A673 (cell line): ENCODE measurements at regions of chr5 and their contacts with region 1.

Region 1: GRCh38 chr5:168219515-168220410 is 71.7 kb upstream of the WWC1 start:
- DNase-seq: peak; percentile 83
- H3K4me3 ChIP-seq: no peak overlapping the region
- H3K27ac ChIP-seq: peak overlapping the region; percentile 44
- H3K4me1 ChIP-seq: peaks cover 47% of the 10 kb centered on the region
- H3K27me3 ChIP-seq: no peaks in the 10 kb centered on the region
- CTCF ChIP-seq: peak; percentile 78

Region 2: DNA sequence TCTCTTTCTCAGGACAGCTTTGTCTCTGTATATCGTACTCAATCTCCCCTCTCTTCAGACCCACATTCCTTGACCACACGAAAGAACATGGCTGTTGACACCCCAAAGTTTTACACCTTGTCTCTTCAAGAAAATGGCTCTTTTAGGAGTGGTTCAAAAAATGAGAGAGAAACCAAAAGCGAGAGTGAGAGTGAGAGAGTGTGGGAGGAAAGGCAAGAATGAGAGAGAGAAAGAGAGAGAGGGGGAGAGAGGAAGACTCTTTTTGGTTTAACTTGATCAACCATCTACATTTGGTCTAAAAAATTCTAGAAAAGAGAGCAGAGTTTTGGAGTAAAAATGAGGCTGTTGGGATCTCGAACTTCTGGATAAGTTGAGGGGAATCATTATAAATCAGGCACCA is 510.1 kb before region 1 on chr5:
- CTCF ChIA-PET with region 1: no interaction called
- POLR2A ChIA-PET with region 1: no interaction called
- intact Hi-C with region 1: loop called (anchors 10 kb)
- DNase-seq: no peak
- H3K4me3 ChIP-seq: no peak overlapping the region
- H3K27ac ChIP-seq: no peak overlapping the region
- H3K4me1 ChIP-seq: peaks cover 37% of the 10 kb centered on the region
- H3K27me3 ChIP-seq: no peaks in the 10 kb centered on the region
- CTCF ChIP-seq: no peak

Region 3: DNA sequence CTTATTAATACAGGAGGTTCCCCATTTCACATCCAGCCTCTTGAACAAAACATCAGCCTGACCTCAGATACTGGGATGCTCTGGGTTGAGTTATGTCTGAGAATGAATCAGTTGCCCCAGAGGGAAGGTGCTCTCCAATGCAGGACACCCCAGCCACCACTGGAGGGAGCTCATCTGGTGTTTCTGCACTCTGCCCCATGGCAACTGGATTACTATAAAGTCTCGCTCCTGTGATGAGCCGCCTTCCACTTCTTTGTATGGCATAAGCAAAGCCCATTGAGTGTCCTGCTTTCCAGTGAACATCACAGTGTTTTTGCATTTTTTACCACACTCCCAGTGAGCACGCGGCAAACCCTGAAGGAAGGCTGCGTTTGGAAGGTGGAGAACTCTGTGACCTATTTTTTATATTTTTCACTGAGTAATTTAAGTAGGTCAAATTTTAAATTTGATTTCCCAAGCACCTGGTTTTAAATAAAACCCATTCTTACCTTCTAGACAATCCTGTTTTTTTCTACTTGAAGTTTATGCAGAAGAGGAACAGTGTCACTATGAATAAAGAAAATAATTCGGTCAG is 105.2 kb before region 1 on chr5:
- CTCF ChIA-PET with region 1: no interaction called
- POLR2A ChIA-PET with region 1: no interaction called
- intact Hi-C with region 1: loop called (anchors 2 kb)
- DNase-seq: peak; percentile 73
- H3K4me3 ChIP-seq: no peak overlapping the region
- H3K27ac ChIP-seq: no peak overlapping the region
- H3K4me1 ChIP-seq: peaks cover 19% of the 10 kb centered on the region
- H3K27me3 ChIP-seq: no peaks in the 10 kb centered on the region
- CTCF ChIP-seq: peak; percentile 83

Region 4: GRCh38 chr5:168291464-168291961 is 71.8 kb after region 1 on chr5 and contains the start of gene WWC1:
- CTCF ChIA-PET with region 1: no interaction called
- POLR2A ChIA-PET with region 1: no interaction called
- intact Hi-C with region 1: no loop called
- DNase-seq: peak; percentile 52
- H3K4me3 ChIP-seq: peak within 1 kb of the TSS; percentile 60
- H3K27ac ChIP-seq: no peak within 1 kb of the TSS
- H3K4me1 ChIP-seq: no peaks in the 10 kb centered on the region
- H3K27me3 ChIP-seq: no peaks in the 10 kb centered on the region
- CTCF ChIP-seq: peak; percentile 39
- total RNA-seq, gene WWC1: 8.2 and 8.8 TPM in 2 replicates

Region 5: DNA sequence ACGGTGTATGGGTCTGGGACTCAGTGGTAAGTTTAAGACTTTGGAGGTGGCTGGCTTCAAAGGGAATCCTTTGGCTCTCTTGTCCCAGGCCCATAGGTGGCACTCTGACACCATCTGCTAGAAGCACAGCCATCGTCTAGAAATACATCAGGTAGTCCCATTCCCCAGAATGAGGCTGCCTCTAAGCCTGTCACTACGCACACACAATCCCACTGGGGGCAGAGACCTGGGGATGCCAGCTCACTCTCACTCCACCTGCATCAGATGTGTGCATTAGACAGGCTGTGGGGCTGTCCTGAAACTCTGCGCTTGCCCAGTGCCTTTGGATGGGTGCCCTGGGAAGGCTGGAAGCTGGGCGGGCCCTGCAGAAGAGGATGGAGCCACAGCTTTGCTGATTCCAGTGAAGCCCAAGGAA is 486.9 kb after region 1 on chr5:
- CTCF ChIA-PET with region 1: no interaction called
- POLR2A ChIA-PET with region 1: no interaction called
- intact Hi-C with region 1: no loop called
- DNase-seq: peak; percentile 51
- H3K4me3 ChIP-seq: no peak overlapping the region
- H3K27ac ChIP-seq: no peak overlapping the region
- H3K4me1 ChIP-seq: no peaks in the 10 kb centered on the region
- H3K27me3 ChIP-seq: no peaks in the 10 kb centered on the region
- CTCF ChIP-seq: peak; percentile 57